ENCODE measurements at regions of chr11 and their contacts with region 1.

Region 1: GRCh38 chr11:34916015-34916842 is at the starts of genes APIP and PDHX:
- DNase-seq: peak; percentile 98
- H3K4me3 Mint-ChIP-seq: peak within 1 kb of the TSS; percentile 98
- H3K27ac Mint-ChIP-seq: peak within 1 kb of the TSS; percentile 95
- H3K4me1 Mint-ChIP-seq: peaks cover 25% of the 10 kb centered on the region
- H3K27me3 Mint-ChIP-seq: no peaks in the 10 kb centered on the region
- total RNA-seq, gene APIP: 26.8 and 29.6 TPM in 2 replicates
- total RNA-seq, gene PDHX: 31.0 and 35.7 TPM in 2 replicates

Region 2: DNA sequence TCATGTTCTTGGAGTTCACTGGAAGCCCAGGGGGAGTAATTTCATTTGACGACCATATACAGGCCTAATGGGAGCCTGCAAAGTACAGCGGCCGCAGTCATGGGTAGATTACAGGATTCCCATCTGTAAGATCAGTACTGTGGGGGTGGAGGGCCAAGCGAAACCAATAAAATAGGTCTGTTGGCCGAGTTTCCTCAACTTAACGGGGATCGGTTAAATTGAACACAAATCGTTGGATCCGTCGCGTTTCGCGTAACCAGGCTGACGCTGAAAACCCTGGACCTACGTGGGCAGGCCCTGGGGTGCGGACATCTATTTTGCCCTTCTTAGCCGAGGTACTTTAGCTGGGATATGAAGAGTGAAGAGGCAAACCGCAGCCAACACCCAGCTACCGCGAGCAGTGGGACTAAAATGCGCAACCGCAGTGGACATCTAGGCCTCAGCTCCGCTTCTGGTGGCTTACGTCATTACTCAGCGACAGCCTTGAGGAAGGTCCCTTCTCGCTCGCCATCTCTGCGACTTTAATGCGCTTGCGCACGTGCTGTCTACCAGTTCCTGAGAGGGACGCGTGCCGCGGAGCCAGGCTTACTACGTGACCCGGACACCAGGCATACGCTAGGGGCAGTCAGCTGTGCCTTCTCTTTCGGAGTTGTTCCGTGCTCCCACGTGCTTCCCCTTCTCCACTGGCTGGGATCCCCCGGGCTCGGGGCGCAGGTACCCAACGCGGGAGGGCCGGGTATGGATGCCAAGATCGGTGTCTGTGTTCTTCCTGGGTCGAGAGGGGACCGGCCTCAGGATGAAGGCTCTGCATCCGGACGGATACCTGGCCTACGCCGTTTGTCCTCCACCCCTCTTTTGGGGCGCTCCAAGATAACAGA is 810.9 kb before region 1 on chr11 and contains the start of gene NAT10:
- intact Hi-C with region 1: loop called (anchors 1 kb)
- DNase-seq: peak; percentile 99
- H3K4me3 Mint-ChIP-seq: peak within 1 kb of the TSS; percentile 97
- H3K27ac Mint-ChIP-seq: peak within 1 kb of the TSS; percentile 90
- H3K4me1 Mint-ChIP-seq: peaks cover 47% of the 10 kb centered on the region
- H3K27me3 Mint-ChIP-seq: peaks cover 3% of the 10 kb centered on the region
- total RNA-seq, gene NAT10: 162 and 169 TPM in 2 replicates

Region 3: GRCh38 chr11:34438529-34439507 is 477.4 kb before region 1 on chr11 and contains the start of gene CAT:
- intact Hi-C with region 1: loop called (anchors 1 kb)
- DNase-seq: peak; percentile 99
- H3K4me3 Mint-ChIP-seq: peak within 1 kb of the TSS; percentile 95
- H3K27ac Mint-ChIP-seq: peak within 1 kb of the TSS; percentile 90
- H3K4me1 Mint-ChIP-seq: peaks cover 17% of the 10 kb centered on the region
- H3K27me3 Mint-ChIP-seq: no peaks in the 10 kb centered on the region
- total RNA-seq, gene CAT: 17.4 and 19.0 TPM in 2 replicates

Region 4: GRCh38 chr11:34926101-34926830 is 10.0 kb after region 1 on chr11:
- intact Hi-C with region 1: loop called (anchors 1 kb)
- DNase-seq: peak; percentile 77
- H3K4me3 Mint-ChIP-seq: no peak overlapping the region
- H3K27ac Mint-ChIP-seq: no peak overlapping the region
- H3K4me1 Mint-ChIP-seq: peaks cover 11% of the 10 kb centered on the region
- H3K27me3 Mint-ChIP-seq: no peaks in the 10 kb centered on the region

Region 5: DNA sequence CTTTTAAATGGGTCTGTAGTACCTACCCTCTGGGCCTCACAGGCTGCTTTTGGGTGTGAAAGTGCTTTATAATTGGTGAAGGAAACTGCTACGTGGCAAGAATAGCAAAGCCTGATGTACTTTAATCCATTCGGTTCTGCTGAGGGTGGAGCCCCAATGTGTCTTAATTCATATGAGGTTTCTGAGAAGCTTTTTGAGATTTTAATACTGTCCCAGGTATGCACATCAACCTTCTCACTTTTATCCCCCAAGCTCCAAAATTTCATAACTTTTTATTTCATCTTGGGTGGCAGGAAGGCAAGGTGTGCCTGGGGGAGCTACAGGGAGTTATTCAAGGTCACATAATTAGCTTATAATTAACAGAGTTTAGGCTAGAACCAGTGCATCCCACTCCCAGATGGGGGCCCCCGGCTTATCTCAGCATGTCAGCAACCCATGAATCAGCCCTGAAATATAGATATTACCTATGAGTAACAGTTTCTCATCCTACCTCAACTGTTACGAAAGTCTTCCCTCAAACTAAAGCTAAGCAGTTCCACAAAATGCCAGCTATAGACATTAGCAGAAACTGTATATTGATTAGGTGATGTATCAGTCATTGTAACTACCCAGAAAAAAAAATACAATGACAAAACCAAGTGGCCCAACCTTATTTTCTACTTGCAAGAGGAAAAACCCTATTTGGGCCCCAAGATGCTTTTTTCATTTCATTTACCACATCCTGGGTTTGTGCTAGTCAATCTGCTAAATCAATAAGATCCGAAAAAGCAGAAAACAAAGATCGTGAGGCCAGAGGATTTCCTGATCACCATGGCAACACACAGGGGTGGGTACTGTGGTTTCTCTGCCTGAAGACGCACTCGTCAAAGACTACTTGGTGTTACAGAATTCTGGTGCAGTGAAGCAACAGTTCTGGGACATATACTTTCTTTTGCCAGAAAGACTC is 249.5 kb after region 1 on chr11:
- intact Hi-C with region 1: loop called (anchors 2 kb)
- DNase-seq: peak; percentile 98
- H3K4me3 Mint-ChIP-seq: peak overlapping the region; percentile 78
- H3K27ac Mint-ChIP-seq: peak overlapping the region; percentile 99
- H3K4me1 Mint-ChIP-seq: peaks cover 93% of the 10 kb centered on the region
- H3K27me3 Mint-ChIP-seq: no peaks in the 10 kb centered on the region

Region 6: DNA sequence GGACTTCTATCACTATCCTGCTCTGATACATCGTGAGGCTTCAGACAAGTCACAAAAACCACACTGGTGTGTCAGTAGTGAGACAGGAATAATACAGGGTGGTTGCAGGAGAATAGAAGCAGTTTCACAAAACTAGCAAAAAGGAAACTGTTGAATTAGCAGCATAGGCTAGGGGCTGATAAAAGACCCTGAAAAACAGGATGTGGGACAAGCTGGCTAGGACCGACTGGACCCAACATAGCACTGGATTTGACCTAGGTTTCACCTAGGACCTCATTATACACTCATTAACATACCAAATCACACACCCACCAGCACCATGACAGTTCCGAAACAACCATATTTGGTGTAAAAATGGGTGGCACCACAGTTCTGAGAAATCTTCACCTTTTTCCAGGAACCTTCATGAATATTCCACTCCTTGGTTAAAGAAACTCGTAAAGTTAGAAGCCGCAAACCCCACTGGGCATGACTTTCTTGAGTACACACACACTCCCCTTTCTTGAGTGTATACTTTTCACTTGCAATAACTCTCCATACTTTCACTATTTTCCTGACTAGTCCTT is 426.9 kb after region 1 on chr11:
- intact Hi-C with region 1: loop called (anchors 1 kb)
- DNase-seq: peak; percentile 92
- H3K4me3 Mint-ChIP-seq: peak overlapping the region; percentile 68
- H3K27ac Mint-ChIP-seq: peak overlapping the region; percentile 89
- H3K4me1 Mint-ChIP-seq: peaks cover 37% of the 10 kb centered on the region
- H3K27me3 Mint-ChIP-seq: peaks cover 3% of the 10 kb centered on the region

Measured in activated CD4-positive, alpha-beta T cell treated with anti-CD3 and anti-CD28 coated beads, Interleukin-2, amount 10 ng/mL, durations not matched to agents 24 days and 14 days (primary cell).